ENCODE measurements at regions of chr15 and their contacts with region 1.

Region 1: GRCh38 chr15:45795440-45796069 is 160.7 kb downstream of the SQOR start:
- DNase-seq: peak; percentile 4
- H3K4me3 ChIP-seq: no peak overlapping the region
- H3K27me3 ChIP-seq: 0 out of 2 replicates have a peak, but pooled peaks cover 1% of the 10 kb centered on the region
- CTCF ChIP-seq: peak; percentile 69

Region 2: DNA sequence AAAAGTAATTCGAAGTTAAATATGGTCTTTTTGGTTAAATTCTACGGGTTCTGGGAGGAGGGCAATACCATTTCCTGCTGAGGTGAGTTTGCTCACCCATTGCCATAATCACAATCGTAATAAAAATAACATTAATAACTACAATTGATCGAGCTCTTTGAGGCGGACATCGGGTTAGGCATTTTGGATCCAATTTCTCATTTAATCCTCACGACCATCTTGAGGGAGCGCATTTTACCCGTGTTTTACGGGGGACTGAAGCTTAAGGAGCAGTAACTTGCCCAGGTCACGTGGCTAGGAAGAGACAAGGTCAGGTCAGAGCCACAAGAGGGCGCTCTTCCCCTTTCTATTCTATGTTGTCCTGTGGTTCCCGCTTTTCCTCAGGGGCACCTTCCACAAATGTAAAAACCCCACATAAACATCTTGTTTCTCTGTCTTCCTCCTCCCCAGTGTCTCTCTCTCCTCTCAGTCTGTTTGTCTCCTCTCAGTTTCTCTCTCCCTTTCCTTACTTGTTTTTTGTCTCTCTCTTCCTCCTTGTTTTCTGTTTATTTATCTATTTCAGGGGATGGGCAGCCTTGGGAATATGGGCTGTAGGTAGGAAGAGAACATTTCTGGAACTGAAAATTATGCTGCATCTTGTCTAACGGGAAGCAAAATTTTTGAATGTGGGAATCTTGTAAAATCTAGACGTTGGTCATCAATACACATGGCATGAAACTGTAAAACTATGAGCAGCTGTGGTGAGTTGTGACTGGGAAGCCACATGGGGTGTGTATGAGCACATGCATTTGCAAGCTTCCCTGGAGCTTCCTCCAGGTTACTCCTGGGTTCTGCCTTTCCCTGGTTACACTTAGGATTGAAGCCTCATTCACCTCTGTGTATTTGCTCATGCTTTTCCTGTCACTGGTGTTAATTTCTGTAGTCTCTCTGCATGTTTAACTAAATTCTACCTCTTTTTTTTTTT is 89.8 kb before region 1 on chr15:
- CTCF ChIA-PET with region 1: interaction called, 11 read pairs
- POLR2A ChIA-PET with region 1: no interaction called
- DNase-seq: peak; percentile 25
- H3K4me3 ChIP-seq: peak overlapping the region; percentile 53
- H3K27me3 ChIP-seq: peaks cover 6% of the 10 kb centered on the region; the same call in 1 of the 2 replicates
- CTCF ChIP-seq: peak; percentile 81

Region 3: GRCh38 chr15:46091860-46092450 is 296.4 kb after region 1 on chr15:
- CTCF ChIA-PET with region 1: interaction called, 17 read pairs
- POLR2A ChIA-PET with region 1: no interaction called
- DNase-seq: no peak
- H3K4me3 ChIP-seq: no peak overlapping the region
- H3K27me3 ChIP-seq: no peaks in the 10 kb centered on the region
- CTCF ChIP-seq: peak; percentile 50

Measured in BJ (cell line).